ENCODE measurements at regions of chr14 and their contacts with region 1.

Region 1: DNA sequence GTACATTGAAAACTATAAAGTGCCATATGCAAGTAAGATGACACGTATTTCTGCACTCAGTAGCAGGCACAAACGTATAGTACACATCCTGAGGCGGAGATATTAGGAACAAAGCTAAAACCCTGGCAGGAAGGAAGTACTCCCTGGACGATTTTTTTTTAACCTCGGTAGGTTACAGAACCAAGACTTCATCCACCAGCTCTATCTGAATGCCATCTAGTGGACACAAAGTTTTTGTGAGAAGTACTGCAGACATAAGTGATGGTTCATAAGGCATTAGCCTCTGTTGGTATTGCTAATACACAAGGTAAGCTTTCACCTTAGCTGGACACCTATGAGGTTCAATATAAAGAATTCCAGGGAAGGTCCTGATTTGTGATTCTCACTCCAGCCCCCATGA is 83.0 kb upstream of the CCDC196 start:
- DNase-seq: peak; percentile 40
- ATAC-seq: peak; percentile 92
- H3K4me3 ChIP-seq: no peak overlapping the region
- H3K27ac ChIP-seq: no peak overlapping the region
- H3K4me1 ChIP-seq: peaks cover 5% of the 10 kb centered on the region; the same call in 1 of the 2 replicates
- H3K27me3 ChIP-seq: no peaks in the 10 kb centered on the region; a peak in 1 of 5 replicates
- CTCF ChIP-seq: peak; percentile 57
- EP300 ChIP-seq: no peak
- POLR2A ChIP-seq: no peak
- RAD21 ChIP-seq: no peak

Region 2: GRCh38 chr14:66359500-66359899 is 43.7 kb before region 1 on chr14:
- CTCF ChIA-PET with region 1: interaction called, 17 read pairs
- POLR2A ChIA-PET with region 1: no interaction called
- in situ Hi-C with region 1: no loop called
- intact Hi-C with region 1: loop called (anchors 1 kb)
- DNase-seq: peak; percentile 53
- ATAC-seq: no peak
- H3K4me3 ChIP-seq: no peak overlapping the region
- H3K27ac ChIP-seq: no peak overlapping the region
- H3K4me1 ChIP-seq: no peaks in the 10 kb centered on the region
- H3K27me3 ChIP-seq: no peaks in the 10 kb centered on the region
- CTCF ChIP-seq: peak; percentile 72
- EP300 ChIP-seq: no peak
- POLR2A ChIP-seq: no peak
- RAD21 ChIP-seq: no peak

Region 3: GRCh38 chr14:66476964-66477363 is 73.8 kb after region 1 on chr14:
- CTCF ChIA-PET with region 1: no interaction called
- POLR2A ChIA-PET with region 1: no interaction called
- in situ Hi-C with region 1: no loop called
- intact Hi-C with region 1: loop called (anchors 2 kb)
- DNase-seq: no peak
- ATAC-seq: no peak
- H3K4me3 ChIP-seq: no peak overlapping the region
- H3K27ac ChIP-seq: no peak overlapping the region
- H3K4me1 ChIP-seq: no peaks in the 10 kb centered on the region
- H3K27me3 ChIP-seq: no peaks in the 10 kb centered on the region
- CTCF ChIP-seq: no peak
- EP300 ChIP-seq: no peak
- POLR2A ChIP-seq: no peak
- RAD21 ChIP-seq: no peak

Region 4: DNA sequence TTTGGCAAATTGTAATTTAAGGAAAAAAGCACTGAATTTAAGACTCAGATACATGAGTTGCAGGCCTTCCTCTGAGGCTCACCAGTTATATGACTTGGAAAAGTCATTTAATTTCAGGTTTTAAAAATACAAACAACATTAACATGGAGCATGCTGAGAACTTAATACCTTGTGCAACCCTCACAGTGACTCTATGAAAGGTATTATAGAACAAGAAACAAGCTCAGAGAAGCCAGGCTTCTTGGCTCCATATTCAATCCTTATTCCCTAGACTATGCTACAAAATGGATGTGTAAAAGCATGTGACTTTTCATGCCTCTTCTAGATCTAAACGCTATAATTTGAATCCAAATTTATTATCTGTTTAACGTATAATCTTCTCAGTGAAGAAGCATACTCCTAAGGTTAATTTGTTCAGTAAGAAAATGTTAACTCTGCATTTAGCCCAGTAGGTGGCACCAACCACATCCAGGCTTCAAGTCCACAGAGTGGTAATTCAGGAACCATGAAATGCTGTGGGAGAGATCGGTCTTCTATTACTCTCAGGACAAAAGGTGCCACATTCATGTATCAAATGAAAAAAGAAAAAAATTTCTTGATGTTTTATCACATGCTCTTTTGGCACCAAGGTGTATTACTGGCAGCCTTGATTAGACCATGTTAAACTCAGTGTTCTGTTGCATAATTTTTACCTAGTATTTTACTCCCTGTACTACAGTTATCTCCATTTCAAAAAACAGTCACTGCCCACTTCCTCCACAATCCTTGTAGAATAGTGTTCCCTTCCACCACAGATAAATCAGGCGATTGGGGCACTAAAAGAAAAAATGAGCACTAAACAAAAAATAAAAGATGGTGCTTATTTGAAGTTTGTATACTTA is 92.3 kb after region 1 on chr14:
- CTCF ChIA-PET with region 1: no interaction called
- POLR2A ChIA-PET with region 1: no interaction called
- in situ Hi-C with region 1: no loop called
- intact Hi-C with region 1: loop called (anchors 2 kb)
- DNase-seq: peak; percentile 65
- ATAC-seq: peak; percentile 98
- H3K4me3 ChIP-seq: peak overlapping the region; percentile 29 to 45 (median 36); a peak in 5 of 6 replicates
- H3K27ac ChIP-seq: no peak overlapping the region
- H3K4me1 ChIP-seq: peaks cover 17% of the 10 kb centered on the region
- H3K27me3 ChIP-seq: no peaks in the 10 kb centered on the region
- CTCF ChIP-seq: peak; percentile 80
- EP300 ChIP-seq: no peak
- POLR2A ChIP-seq: no peak
- RAD21 ChIP-seq: peak; percentile 49; the same call in 1 of the 2 replicates

Region 5: GRCh38 chr14:66662374-66662773 is 259.2 kb after region 1 on chr14:
- CTCF ChIA-PET with region 1: interaction called, 3 read pairs
- POLR2A ChIA-PET with region 1: no interaction called
- in situ Hi-C with region 1: no loop called
- intact Hi-C with region 1: loop called (anchors 5 kb)
- DNase-seq: peak; percentile 10
- ATAC-seq: peak; percentile 61; the same call in 2 of the 3 replicates
- H3K4me3 ChIP-seq: no peak overlapping the region
- H3K27ac ChIP-seq: no peak overlapping the region
- H3K4me1 ChIP-seq: no peaks in the 10 kb centered on the region
- H3K27me3 ChIP-seq: no peaks in the 10 kb centered on the region
- CTCF ChIP-seq: peak; percentile 57
- EP300 ChIP-seq: no peak
- POLR2A ChIP-seq: no peak
- RAD21 ChIP-seq: no peak

Region 6: GRCh38 chr14:66746316-66747006 is 343.3 kb after region 1 on chr14:
- CTCF ChIA-PET with region 1: no interaction called
- POLR2A ChIA-PET with region 1: no interaction called
- in situ Hi-C with region 1: no loop called
- intact Hi-C with region 1: loop called (anchors 5 kb)
- DNase-seq: peak; percentile 12
- ATAC-seq: peak; percentile 64
- H3K4me3 ChIP-seq: no peak overlapping the region
- H3K27ac ChIP-seq: no peak overlapping the region
- H3K4me1 ChIP-seq: no peaks in the 10 kb centered on the region
- H3K27me3 ChIP-seq: no peaks in the 10 kb centered on the region
- CTCF ChIP-seq: no peak; the same call in 1 of the 2 replicates
- EP300 ChIP-seq: no peak
- POLR2A ChIP-seq: no peak
- RAD21 ChIP-seq: no peak

Measured in HepG2 (cell line).